B cell (primary cell): ENCODE measurements at regions of chr1 and their contacts with region 1.

Region 1: GRCh38 chr1:52686830-52687229 is 11.3 kb downstream of the COA7 start:
- DNase-seq: no peak
- ATAC-seq: no peak
- H3K4me3 ChIP-seq: no peak overlapping the region
- H3K4me3 Mint-ChIP-seq: no peak overlapping the region
- H3K27ac ChIP-seq: peak overlapping the region in 1 of 2 donors; percentile 39
- H3K27ac Mint-ChIP-seq: no peak overlapping the region
- H3K4me1 ChIP-seq: peaks cover 12 to 18% of the 10 kb centered on the region in 2 donors
- H3K4me1 Mint-ChIP-seq: peaks cover 14% of the 10 kb centered on the region
- H3K27me3 ChIP-seq: no peaks in the 10 kb centered on the region
- H3K27me3 Mint-ChIP-seq: no peaks in the 10 kb centered on the region
- CTCF ChIP-seq: no peak

Region 2: DNA sequence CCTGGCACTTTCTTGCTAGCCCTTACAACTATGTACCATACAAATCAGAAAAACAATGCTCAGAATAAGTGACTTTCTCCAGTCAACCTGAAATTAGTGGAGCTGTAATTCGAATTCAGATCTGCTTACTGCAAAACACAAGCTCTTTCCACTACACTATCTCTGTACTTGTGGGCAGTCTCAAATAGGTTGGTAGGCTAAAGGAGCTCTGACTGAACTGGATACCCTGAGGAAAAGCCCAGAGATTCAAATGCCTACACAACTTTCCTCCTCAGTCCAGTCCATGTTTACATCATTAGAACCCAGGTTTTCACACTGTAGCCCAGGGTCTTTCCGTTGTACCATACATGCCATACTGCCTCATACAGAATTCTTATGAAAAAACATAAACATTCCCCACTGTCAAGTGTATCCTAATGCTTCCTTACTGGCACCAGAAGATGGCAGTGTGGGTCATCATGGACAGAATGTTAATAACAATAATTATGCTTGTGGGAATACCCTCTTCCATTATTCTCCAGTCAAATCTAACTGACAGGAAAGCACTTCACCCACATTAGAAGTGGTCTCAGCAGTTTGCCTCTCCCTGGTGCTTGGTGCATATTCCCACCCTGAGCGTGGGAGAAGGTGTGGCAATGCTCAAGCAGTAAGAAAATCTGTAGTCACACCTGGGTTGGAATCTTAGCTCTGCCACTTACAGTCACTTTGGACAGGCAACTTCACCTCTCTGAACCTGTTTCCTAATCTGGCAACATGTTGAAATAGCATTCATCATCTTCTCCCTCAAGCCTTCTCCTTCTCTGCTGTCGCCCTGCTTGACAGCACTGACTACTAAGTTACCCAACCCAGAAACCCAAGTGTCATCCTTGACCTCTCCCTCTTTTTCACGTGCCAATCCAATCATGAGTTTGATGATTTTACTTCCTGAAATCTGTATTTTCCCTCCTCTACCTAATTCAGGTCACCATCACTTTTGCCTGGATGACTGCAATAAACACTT is 559.3 kb before region 1 on chr1:
- CTCF ChIA-PET with region 1: interaction called, 25 read pairs
- POLR2A ChIA-PET with region 1: no interaction called
- intact Hi-C with region 1: loop called (anchors 1 kb)
- DNase-seq: peak; percentile 45
- ATAC-seq: no peak
- H3K4me3 ChIP-seq: no peak overlapping the region
- H3K4me3 Mint-ChIP-seq: no peak overlapping the region
- H3K27ac ChIP-seq: no peak overlapping the region
- H3K27ac Mint-ChIP-seq: no peak overlapping the region
- H3K4me1 ChIP-seq: no peaks in the 10 kb centered on the region
- H3K4me1 Mint-ChIP-seq: peaks cover 3% of the 10 kb centered on the region
- H3K27me3 ChIP-seq: peaks cover 0 to 5% (median 4%) of the 10 kb centered on the region in 4 experiments
- H3K27me3 Mint-ChIP-seq: peaks cover 51% of the 10 kb centered on the region
- CTCF ChIP-seq: peak; percentile 50

Region 3: DNA sequence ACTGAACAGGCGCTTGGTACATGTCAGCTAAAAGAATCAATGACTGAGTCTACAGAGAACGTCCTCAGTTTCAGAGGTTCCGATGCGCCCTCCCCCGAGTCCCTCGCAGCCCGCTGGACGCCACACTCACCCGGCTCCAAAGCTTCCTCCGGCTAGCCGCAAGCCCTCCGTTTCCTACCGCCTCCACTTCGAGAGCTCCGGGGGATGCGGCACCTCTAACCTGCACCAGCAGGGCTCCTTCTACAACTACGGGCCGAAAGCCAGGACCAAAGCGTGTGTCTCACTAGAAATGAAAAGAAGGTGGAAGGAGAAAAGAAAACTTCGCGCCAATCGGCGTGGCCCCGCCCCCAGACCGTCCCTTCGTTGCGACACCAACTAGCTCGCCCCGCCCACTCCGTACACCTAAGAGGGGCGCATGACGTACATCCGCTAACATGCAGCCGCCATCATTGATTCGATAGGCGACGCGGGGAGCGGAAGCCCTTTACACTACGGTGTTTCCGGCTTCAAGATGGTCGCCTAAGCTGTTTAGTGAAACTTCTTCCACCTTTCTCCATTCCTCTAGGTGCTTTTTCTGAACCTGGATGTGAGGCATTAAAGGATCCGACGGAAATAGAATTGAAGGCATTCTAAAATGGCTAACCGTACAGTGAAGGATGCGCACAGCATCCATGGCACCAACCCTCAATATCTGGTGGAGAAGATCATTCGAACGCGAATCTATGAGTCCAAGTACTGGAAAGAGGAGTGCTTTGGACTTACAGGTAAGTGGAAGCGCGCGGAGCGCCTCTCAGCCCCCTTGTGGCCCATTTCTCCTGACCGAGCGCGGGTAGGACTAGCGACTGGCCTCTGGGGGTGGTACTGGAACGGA is 282.5 kb before region 1 on chr1 and contains the starts of genes ORC1 and PRPF38A:
- CTCF ChIA-PET with region 1: interaction called, 22 read pairs
- POLR2A ChIA-PET with region 1: no interaction called
- intact Hi-C with region 1: loop called (anchors 1 kb)
- DNase-seq: peak; percentile 98
- ATAC-seq: peak; percentile 98
- H3K4me3 ChIP-seq: peak within 1 kb of the TSS; percentile 76 to 99 (median 95)
- H3K4me3 Mint-ChIP-seq: peak within 1 kb of the TSS; percentile 100
- H3K27ac ChIP-seq: peak within 1 kb of the TSS; percentile 91 to 95
- H3K27ac Mint-ChIP-seq: peak within 1 kb of the TSS; percentile 96
- H3K4me1 ChIP-seq: peaks cover 15 to 22% of the 10 kb centered on the region in 2 donors
- H3K4me1 Mint-ChIP-seq: peaks cover 32% of the 10 kb centered on the region
- H3K27me3 ChIP-seq: no peaks in the 10 kb centered on the region
- H3K27me3 Mint-ChIP-seq: no peaks in the 10 kb centered on the region
- CTCF ChIP-seq: peak; percentile 60
- total RNA-seq, gene ORC1: 1.3 TPM in 2 replicates
- total RNA-seq, gene PRPF38A: 68.1 and 69.8 TPM in 2 replicates

Region 4: DNA sequence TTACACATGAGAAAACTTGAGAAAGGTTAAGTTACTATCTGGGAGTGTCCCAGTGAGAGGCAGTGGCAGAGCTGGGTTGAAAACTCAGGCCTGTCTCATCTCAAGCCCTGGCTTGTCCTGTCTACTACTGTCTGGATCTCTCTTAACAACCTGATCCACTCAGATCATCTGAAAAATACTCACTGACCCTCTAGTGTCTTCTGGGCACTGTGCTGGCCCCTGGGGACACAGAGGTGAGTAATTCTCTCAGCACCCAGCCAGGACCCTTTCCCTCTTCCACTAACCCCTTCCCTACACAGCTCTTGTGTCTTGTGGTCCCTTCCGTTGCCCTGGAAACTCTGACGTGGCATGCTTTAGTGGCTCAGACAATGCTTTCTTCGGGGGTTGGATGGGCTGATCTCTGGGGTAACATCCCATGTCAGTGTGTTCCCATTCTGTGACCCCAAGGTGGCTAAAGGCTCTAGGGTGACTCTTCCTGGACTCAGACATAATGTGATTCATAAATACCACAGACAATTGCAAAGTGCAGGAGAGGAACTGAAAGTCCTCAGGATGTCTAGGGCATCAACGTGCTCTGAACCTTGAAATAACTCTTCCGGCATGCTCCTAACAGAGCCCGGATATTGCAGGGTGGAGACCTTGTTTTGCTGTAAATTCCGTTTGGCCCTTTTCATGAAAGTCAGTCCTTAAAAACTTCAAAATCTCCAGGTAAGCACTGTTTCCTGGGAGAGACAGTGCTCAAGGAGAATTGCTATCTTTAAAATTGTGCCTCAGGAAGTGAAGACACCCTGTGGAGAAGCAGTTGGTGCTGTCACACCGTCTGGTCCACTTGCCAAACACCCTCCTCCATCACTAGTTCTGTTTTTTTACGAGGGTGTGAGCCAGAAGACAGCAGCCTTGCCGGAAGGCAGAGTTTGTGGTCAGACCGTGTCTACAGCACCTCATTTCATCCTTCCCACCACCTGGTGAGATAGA is 49.8 kb before region 1 on chr1:
- CTCF ChIA-PET with region 1: interaction called, 15 read pairs
- POLR2A ChIA-PET with region 1: interaction called, 5 read pairs
- intact Hi-C with region 1: loop called (anchors 5 kb)
- DNase-seq: peak; percentile 95
- ATAC-seq: peak; percentile 69
- H3K4me3 ChIP-seq: peak overlapping the region; percentile 25 to 50 (median 39)
- H3K4me3 Mint-ChIP-seq: peak overlapping the region; percentile 91
- H3K27ac ChIP-seq: peak overlapping the region; percentile 86 to 99
- H3K27ac Mint-ChIP-seq: peak overlapping the region; percentile 100
- H3K4me1 ChIP-seq: peaks cover 85 to 92% of the 10 kb centered on the region in 2 donors
- H3K4me1 Mint-ChIP-seq: peaks cover 79% of the 10 kb centered on the region
- H3K27me3 ChIP-seq: no peaks in the 10 kb centered on the region
- H3K27me3 Mint-ChIP-seq: no peaks in the 10 kb centered on the region
- CTCF ChIP-seq: no peak

Region 5: DNA sequence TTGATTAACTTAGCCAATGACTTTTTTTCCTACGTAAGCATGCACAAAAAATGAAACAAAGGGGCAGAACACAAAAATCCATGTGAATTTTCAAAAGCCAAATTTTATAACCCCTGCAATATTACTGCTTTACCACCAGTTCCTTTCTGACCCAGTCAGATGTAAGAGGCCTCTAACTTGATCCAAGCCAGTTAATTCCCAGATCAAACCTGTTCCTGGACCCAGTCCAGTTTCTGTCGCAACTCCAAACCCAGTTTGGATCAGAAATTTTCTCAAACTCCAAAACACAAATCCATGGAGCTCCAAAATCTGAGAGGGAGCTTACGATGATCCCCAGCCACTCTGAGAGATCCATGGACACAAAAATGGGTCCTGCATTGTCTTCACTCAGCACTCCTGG is 148.0 kb after region 1 on chr1:
- CTCF ChIA-PET with region 1: no interaction called
- POLR2A ChIA-PET with region 1: interaction called, 10 read pairs
- intact Hi-C with region 1: no loop called
- DNase-seq: no peak
- ATAC-seq: no peak
- H3K4me3 ChIP-seq: no peak overlapping the region
- H3K4me3 Mint-ChIP-seq: no peak overlapping the region
- H3K27ac ChIP-seq: no peak overlapping the region
- H3K27ac Mint-ChIP-seq: no peak overlapping the region
- H3K4me1 ChIP-seq: no peaks in the 10 kb centered on the region
- H3K4me1 Mint-ChIP-seq: no peaks in the 10 kb centered on the region
- H3K27me3 ChIP-seq: peaks cover 0 to 4% (median 0%) of the 10 kb centered on the region in 4 experiments
- H3K27me3 Mint-ChIP-seq: peaks cover 6% of the 10 kb centered on the region
- CTCF ChIP-seq: no peak